PC-9 (cell line): ENCODE measurements at regions of chr6 and their contacts with region 1.

Region 1: GRCh38 chr6:31769684-31770371 is 7.3 kb downstream of the VWA7 start:
- DNase-seq: peak; percentile 55 to 83
- H3K4me3 ChIP-seq: no peak overlapping the region
- H3K27ac ChIP-seq: no peak overlapping the region
- H3K4me1 ChIP-seq: peaks cover 5% of the 10 kb centered on the region
- H3K27me3 ChIP-seq: no peaks in the 10 kb centered on the region
- CTCF ChIP-seq: peak; percentile 93

Region 2: GRCh38 chr6:31712296-31712695 is 57.5 kb before region 1 on chr6:
- CTCF ChIA-PET with region 1: interaction called, 15 read pairs
- POLR2A ChIA-PET with region 1: no interaction called
- intact Hi-C with region 1: no loop called
- DNase-seq: no peak
- H3K4me3 ChIP-seq: no peak overlapping the region
- H3K27ac ChIP-seq: no peak overlapping the region
- H3K4me1 ChIP-seq: peaks cover 2% of the 10 kb centered on the region
- H3K27me3 ChIP-seq: no peaks in the 10 kb centered on the region
- CTCF ChIP-seq: peak; percentile 33; the same call in 1 of the 2 replicates

Region 3: GRCh38 chr6:31718267-31718666 is 51.6 kb before region 1 on chr6:
- CTCF ChIA-PET with region 1: interaction called, 14 read pairs
- POLR2A ChIA-PET with region 1: no interaction called
- intact Hi-C with region 1: no loop called
- DNase-seq: peak; percentile 77 to 91
- H3K4me3 ChIP-seq: no peak overlapping the region
- H3K27ac ChIP-seq: no peak overlapping the region; the same call in 1 of the 2 replicates
- H3K4me1 ChIP-seq: peaks cover 42% of the 10 kb centered on the region
- H3K27me3 ChIP-seq: no peaks in the 10 kb centered on the region
- CTCF ChIP-seq: no peak

Region 4: GRCh38 chr6:31729515-31729978 is 40.3 kb before region 1 on chr6:
- CTCF ChIA-PET with region 1: interaction called, 10 read pairs
- POLR2A ChIA-PET with region 1: interaction called, 4 read pairs
- intact Hi-C with region 1: loop called (anchors 1 kb)
- DNase-seq: peak; percentile 78 to 91
- H3K4me3 ChIP-seq: peak overlapping the region; percentile 81
- H3K27ac ChIP-seq: no peak overlapping the region
- H3K4me1 ChIP-seq: peaks cover 15% of the 10 kb centered on the region
- H3K27me3 ChIP-seq: no peaks in the 10 kb centered on the region
- CTCF ChIP-seq: peak; percentile 6; the same call in 1 of the 2 replicates

Region 5: GRCh38 chr6:31752739-31753319 is 17.0 kb before region 1 on chr6:
- CTCF ChIA-PET with region 1: interaction called, 13 read pairs
- POLR2A ChIA-PET with region 1: no interaction called
- intact Hi-C with region 1: no loop called
- DNase-seq: no peak
- H3K4me3 ChIP-seq: no peak overlapping the region
- H3K27ac ChIP-seq: no peak overlapping the region
- H3K4me1 ChIP-seq: peaks cover 3% of the 10 kb centered on the region
- H3K27me3 ChIP-seq: no peaks in the 10 kb centered on the region
- CTCF ChIP-seq: no peak

Region 6: DNA sequence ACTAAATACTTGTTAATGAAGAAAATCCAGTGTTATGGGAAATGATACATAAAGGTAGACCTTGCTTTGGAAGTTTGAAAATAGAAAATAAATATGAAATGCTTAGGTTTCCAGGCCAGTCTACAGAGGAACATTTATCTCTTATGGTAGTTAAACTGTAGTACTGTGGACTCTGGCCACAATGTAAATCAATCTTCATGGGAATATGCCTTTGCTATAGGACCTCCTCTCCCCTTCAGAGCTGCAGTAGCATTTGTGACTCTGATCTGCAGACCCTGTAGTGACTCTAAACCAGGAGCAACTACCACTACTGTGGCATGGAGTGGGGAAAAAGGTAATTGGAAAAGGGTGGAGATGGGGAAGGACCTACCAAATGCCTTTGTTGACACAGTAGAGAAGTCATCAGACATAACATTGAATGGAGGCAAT is 50.1 kb after region 1 on chr6:
- CTCF ChIA-PET with region 1: no interaction called
- POLR2A ChIA-PET with region 1: no interaction called
- intact Hi-C with region 1: no loop called
- DNase-seq: no peak
- H3K4me3 ChIP-seq: peak overlapping the region; percentile 81
- H3K27ac ChIP-seq: peak overlapping the region; percentile 98
- H3K4me1 ChIP-seq: peaks cover 53% of the 10 kb centered on the region
- H3K27me3 ChIP-seq: no peaks in the 10 kb centered on the region
- CTCF ChIP-seq: no peak